ENCODE measurements at regions of chr3 and their contacts with region 1.

Region 1: DNA sequence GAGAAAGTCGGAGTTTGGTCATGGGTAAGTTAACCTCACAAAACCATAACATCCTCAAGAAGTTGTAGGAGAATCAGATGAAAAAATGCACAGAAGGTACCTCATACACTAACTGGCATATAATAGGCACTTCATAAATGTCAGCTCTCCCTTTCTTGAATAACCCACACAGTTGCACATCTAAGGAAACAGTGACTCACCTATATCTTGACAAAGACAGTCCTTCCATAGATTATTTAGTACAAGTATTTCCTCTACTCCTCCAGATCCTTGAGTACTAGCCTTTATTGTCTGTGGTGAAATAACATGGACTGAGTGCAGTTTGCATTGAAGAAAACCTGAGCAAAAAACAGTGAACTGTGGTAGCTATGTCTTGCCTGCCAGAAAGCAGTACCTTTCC is 46.6 kb downstream of the MAGI1 start:
- DNase-seq: no peak
- H3K4me3 Mint-ChIP-seq: no peak overlapping the region
- H3K27ac Mint-ChIP-seq: peak overlapping the region; percentile 78
- H3K4me1 Mint-ChIP-seq: peaks cover 17% of the 10 kb centered on the region
- H3K27me3 Mint-ChIP-seq: no peaks in the 10 kb centered on the region

Region 2: DNA sequence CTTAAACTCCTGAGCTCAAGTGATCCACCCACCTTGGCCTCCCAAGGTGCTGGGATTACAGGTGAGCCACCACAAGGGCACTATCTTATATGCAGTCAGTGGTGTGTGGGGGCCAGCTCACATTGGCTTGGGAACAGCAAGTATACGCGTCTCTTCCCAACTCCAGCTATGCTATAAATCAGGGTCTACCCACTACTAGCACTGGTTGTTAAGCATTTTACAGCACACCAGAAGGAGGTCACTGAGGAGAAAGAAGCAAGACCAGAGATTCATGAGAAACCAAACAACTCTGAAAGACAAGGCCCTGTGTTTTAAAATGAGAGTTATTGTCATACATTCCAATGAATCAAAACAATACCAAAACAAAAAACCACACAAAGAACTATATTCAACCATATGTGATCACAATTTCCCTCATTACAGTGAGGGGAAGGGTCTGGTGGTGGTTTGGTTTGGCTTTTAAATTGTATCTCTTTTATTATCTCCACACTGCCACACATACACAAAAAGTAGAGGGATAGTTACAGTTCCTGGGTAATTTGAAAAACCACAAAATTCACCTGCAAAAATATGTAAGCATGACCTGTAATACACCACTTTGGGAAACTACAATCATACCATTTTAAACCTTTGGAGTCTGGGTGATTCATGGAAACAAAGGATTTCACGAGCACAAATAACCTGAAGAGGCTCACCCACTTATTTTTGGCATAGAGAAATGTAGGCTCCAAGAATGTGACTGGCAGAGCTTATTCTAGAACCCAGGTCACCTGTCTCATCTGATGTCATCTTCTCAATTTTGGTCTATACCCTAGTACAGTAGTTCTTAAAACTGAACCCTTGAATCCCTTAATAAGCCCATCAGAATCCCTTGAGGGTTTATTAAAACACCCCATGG is 41.4 kb after region 1 on chr3:
- intact Hi-C with region 1: loop called (anchors 1 kb)
- DNase-seq: no peak
- H3K4me3 Mint-ChIP-seq: no peak overlapping the region
- H3K27ac Mint-ChIP-seq: peak overlapping the region; percentile 80
- H3K4me1 Mint-ChIP-seq: peaks cover 15% of the 10 kb centered on the region
- H3K27me3 Mint-ChIP-seq: peaks cover 24% of the 10 kb centered on the region

Region 3: GRCh38 chr3:66362541-66362941 is 370.4 kb after region 1 on chr3:
- intact Hi-C with region 1: no loop called
- DNase-seq: no peak
- H3K4me3 Mint-ChIP-seq: no peak overlapping the region
- H3K27ac Mint-ChIP-seq: no peak overlapping the region
- H3K4me1 Mint-ChIP-seq: peaks cover 3% of the 10 kb centered on the region
- H3K27me3 Mint-ChIP-seq: no peaks in the 10 kb centered on the region